HepG2 (cell line): ENCODE measurements at regions of chrX and their contacts with region 1.

Region 1: GRCh38 chrX:19535476-19535875 is 20.2 kb upstream of the MAP3K15 start:
- DNase-seq: peak; percentile 6
- ATAC-seq: no peak
- H3K4me3 ChIP-seq: no peak overlapping the region
- H3K27ac ChIP-seq: no peak overlapping the region
- H3K4me1 ChIP-seq: no peaks in the 10 kb centered on the region
- H3K27me3 ChIP-seq: no peaks in the 10 kb centered on the region
- CTCF ChIP-seq: no peak
- EP300 ChIP-seq: no peak
- POLR2A ChIP-seq: no peak
- RAD21 ChIP-seq: no peak

Region 2: GRCh38 chrX:19372170-19372546 is 163.3 kb before region 1 on chrX:
- CTCF ChIA-PET with region 1: interaction called, 4 read pairs
- POLR2A ChIA-PET with region 1: no interaction called
- in situ Hi-C with region 1: no loop called
- intact Hi-C with region 1: loop called (anchors 5 kb)
- DNase-seq: peak; percentile 32
- ATAC-seq: peak; percentile 86
- H3K4me3 ChIP-seq: no peak overlapping the region
- H3K27ac ChIP-seq: no peak overlapping the region
- H3K4me1 ChIP-seq: no peaks in the 10 kb centered on the region
- H3K27me3 ChIP-seq: no peaks in the 10 kb centered on the region
- CTCF ChIP-seq: peak; percentile 66
- EP300 ChIP-seq: no peak
- POLR2A ChIP-seq: no peak
- RAD21 ChIP-seq: peak; percentile 53

Region 3: GRCh38 chrX:19382555-19383145 is 152.8 kb before region 1 on chrX:
- CTCF ChIA-PET with region 1: no interaction called
- POLR2A ChIA-PET with region 1: no interaction called
- in situ Hi-C with region 1: no loop called
- intact Hi-C with region 1: loop called (anchors 5 kb)
- DNase-seq: peak; percentile 14
- ATAC-seq: peak; percentile 91
- H3K4me3 ChIP-seq: no peak overlapping the region
- H3K27ac ChIP-seq: no peak overlapping the region
- H3K4me1 ChIP-seq: no peaks in the 10 kb centered on the region
- H3K27me3 ChIP-seq: no peaks in the 10 kb centered on the region
- CTCF ChIP-seq: peak; percentile 72
- EP300 ChIP-seq: no peak
- POLR2A ChIP-seq: no peak
- RAD21 ChIP-seq: no peak

Region 4: GRCh38 chrX:19554786-19555185 is 19.3 kb after region 1 on chrX:
- CTCF ChIA-PET with region 1: no interaction called
- POLR2A ChIA-PET with region 1: no interaction called
- in situ Hi-C with region 1: no loop called
- intact Hi-C with region 1: no loop called
- DNase-seq: no peak
- ATAC-seq: no peak
- H3K4me3 ChIP-seq: no peak overlapping the region
- H3K27ac ChIP-seq: no peak overlapping the region
- H3K4me1 ChIP-seq: no peaks in the 10 kb centered on the region
- H3K27me3 ChIP-seq: no peaks in the 10 kb centered on the region
- CTCF ChIP-seq: no peak
- EP300 ChIP-seq: no peak
- POLR2A ChIP-seq: no peak
- RAD21 ChIP-seq: no peak